HAP-1 (cell line): ENCODE measurements at regions of chr19 and their contacts with region 1.

Region 1: GRCh38 chr19:47075179-47075810 is 26.9 kb upstream of the TMEM160 start:
- DNase-seq: no peak
- H3K4me3 ChIP-seq: no peak overlapping the region
- H3K4me1 ChIP-seq: no peaks in the 10 kb centered on the region
- H3K27me3 ChIP-seq: no peaks in the 10 kb centered on the region

Region 2: DNA sequence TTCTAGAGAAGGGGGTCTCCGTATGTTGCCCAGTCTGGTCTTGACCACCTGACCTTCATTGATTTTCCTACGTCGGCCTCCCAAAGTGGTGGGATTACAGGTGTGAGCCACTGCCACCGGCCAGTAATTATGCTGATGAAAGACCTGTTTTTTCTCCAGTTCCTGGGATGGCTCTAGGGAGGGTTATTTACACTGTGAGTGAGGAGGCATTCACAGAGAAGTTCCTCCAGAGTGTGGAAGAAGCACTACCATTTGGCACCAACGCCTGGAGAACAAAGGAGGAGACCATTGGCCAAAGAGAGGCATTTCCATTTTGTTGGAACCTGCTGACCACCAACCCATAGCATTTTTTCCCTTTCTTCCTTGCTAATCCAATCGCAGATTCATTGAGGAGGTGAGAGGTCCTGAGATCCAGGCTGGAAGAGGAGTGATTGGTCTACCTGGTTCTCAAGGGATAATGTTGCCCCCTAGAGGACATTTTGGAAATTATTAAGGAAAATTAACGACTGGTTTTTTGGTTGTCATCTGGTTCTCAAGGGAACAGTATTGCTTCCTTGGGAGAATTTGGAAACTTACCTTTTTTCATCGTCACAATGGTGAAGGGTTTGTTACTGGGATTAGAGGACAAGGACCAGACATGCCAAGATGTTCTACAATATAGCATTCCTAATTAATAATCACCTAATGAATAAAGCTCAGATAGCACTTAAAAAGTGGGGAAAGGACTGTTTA is 49.8 kb after region 1 on chr19:
- in situ Hi-C with region 1: loop called (anchors 10 kb)
- DNase-seq: peak; percentile 62 to 91
- H3K4me3 ChIP-seq: no peak overlapping the region
- H3K4me1 ChIP-seq: peaks cover 2% of the 10 kb centered on the region; the same call in 1 of the 2 replicates
- H3K27me3 ChIP-seq: no peaks in the 10 kb centered on the region